ENCODE measurements at regions of chr10 and their contacts with region 1.

Region 1: DNA sequence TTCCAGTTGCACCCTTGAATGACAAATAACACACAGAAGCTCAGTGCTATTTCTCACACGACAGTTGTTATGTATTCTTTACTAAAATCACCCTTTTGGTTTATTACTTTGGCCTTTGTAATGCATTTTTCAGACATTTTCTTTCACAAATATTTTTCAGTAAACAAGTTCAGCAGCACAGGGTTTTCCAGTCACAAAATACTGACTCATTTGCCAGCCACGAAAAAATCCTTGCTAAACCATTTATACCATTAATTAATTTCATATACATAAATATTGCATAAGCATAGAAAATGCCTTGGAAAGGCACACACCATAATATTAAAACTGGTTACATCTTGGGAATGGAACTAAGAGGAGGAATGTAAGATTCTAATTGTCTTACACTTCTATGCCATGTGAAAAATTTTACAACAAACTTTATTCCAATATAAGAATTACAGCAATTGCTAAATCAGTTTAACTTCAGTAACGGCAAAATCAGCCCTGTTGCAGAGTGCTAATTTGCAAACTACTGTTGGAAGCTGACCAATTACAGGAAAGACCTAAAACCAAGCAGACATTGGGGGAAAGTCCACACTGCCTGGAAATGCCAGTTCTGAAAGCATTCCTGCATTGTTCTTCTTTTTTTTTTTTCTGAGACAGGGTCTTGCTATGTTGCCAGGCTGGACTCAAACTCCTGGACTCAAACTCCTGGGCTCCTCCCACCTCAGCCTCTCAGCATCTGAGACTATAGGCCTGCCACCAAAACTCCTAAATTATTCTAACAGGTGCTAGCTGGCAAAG is 31.6 kb upstream of the PBLD start:
- DNase-seq: no peak
- H3K4me3 ChIP-seq: no peak overlapping the region
- H3K27ac ChIP-seq: no peak overlapping the region
- H3K4me1 ChIP-seq: no peaks in the 10 kb centered on the region
- H3K27me3 ChIP-seq: no peaks in the 10 kb centered on the region
- CTCF ChIP-seq: no peak
- EP300 ChIP-seq: no peak
- POLR2A ChIP-seq: no peak
- RAD21 ChIP-seq: no peak

Region 2: DNA sequence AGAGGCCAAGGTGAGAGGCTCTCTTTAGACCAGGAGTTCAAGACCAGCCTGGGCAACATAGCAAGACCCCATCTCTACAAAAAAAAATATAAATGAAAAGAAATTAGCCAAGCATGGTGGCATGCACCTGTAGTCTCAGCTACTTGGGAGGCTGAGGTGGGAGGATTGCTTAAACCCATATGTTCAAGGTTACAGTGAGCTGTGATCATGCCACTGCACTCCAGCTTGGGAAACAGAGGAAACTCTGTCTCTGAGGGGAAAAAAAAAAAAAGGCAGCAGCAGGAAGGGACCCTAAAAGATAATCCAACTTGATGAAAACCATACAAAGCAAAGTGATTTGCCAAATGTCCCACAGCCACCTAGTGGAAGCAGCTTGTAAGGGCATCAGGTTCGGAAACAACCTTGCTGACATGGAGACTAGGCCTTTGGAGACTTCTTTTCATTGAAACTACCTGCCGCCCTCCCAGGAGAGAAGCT is 16.0 kb before region 1 on chr10:
- CTCF ChIA-PET with region 1: interaction called, 21 read pairs
- POLR2A ChIA-PET with region 1: interaction called, 3 read pairs
- DNase-seq: no peak
- H3K4me3 ChIP-seq: no peak overlapping the region
- H3K27ac ChIP-seq: no peak overlapping the region
- H3K4me1 ChIP-seq: peaks cover 0 to 2% (median 0%) of the 10 kb centered on the region in 4 experiments; a peak in 1 of 7 replicates
- H3K27me3 ChIP-seq: no peaks in the 10 kb centered on the region
- CTCF ChIP-seq: peak; percentile 59 to 92 (median 73)
- EP300 ChIP-seq: no peak
- POLR2A ChIP-seq: no peak
- RAD21 ChIP-seq: peak; percentile 57 to 74